MCF 10A (cell line): ENCODE measurements at regions of chr9 and their contacts with region 1.

Region 1: DNA sequence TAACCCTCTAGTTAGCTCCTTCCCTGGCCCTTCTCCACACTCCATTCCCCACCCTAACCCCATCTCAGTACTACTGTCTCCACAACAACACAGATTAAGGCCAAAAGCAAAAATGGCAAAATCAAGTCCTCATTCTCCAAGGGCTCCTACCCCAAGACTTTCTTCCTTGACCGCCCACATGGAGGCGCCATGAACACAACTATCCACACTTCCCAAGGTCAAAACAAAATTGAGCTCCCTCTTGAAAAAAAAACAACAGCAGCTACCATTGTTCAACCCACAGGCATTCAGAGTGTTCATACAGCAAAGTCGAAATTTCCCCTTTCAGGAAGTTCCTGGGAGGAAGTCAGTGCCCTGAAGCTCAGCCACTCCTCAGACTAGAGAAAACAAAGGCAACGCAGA is 54.4 kb downstream of the GNAQ start:
- DNase-seq: peak; percentile 78
- H3K4me3 Mint-ChIP-seq: no peak overlapping the region
- H3K27ac Mint-ChIP-seq: peak overlapping the region; percentile 43
- H3K4me1 Mint-ChIP-seq: peaks cover 35% of the 10 kb centered on the region
- H3K27me3 Mint-ChIP-seq: no peaks in the 10 kb centered on the region
- CTCF ChIP-seq: peak; percentile 42

Region 2: GRCh38 chr9:77997611-77998284 is 20.5 kb after region 1 on chr9:
- CTCF ChIA-PET with region 1: interaction called, 7 read pairs
- POLR2A ChIA-PET with region 1: interaction called, 10 read pairs
- intact Hi-C with region 1: no loop called
- DNase-seq: no peak
- H3K4me3 Mint-ChIP-seq: no peak overlapping the region
- H3K27ac Mint-ChIP-seq: no peak overlapping the region
- H3K4me1 Mint-ChIP-seq: peaks cover 19% of the 10 kb centered on the region
- H3K27me3 Mint-ChIP-seq: no peaks in the 10 kb centered on the region
- CTCF ChIP-seq: no peak

Region 3: DNA sequence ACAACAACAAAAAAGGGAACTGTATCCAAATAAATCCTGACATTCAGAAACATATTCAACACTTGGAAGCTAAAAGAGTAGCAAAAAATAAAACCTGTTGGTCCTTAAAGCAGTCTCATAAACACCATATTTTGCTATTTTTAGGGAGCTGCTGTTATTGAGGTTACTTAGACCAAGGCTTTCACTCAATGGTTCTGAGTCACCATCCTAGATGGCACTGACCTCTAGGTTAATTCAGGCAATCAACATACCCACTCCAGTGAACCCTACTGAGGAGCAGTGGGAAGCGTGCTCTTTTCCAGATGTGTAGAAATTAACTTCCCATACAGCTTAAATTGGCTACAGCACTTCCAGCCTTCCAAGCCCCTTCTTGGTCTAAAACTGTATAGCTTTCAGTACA is 49.2 kb after region 1 on chr9:
- CTCF ChIA-PET with region 1: interaction called, 11 read pairs
- POLR2A ChIA-PET with region 1: interaction called, 30 read pairs
- intact Hi-C with region 1: no loop called
- DNase-seq: peak; percentile 25
- H3K4me3 Mint-ChIP-seq: no peak overlapping the region
- H3K27ac Mint-ChIP-seq: peak overlapping the region; percentile 27
- H3K4me1 Mint-ChIP-seq: peaks cover 48% of the 10 kb centered on the region
- H3K27me3 Mint-ChIP-seq: no peaks in the 10 kb centered on the region
- CTCF ChIP-seq: no peak

Region 4: DNA sequence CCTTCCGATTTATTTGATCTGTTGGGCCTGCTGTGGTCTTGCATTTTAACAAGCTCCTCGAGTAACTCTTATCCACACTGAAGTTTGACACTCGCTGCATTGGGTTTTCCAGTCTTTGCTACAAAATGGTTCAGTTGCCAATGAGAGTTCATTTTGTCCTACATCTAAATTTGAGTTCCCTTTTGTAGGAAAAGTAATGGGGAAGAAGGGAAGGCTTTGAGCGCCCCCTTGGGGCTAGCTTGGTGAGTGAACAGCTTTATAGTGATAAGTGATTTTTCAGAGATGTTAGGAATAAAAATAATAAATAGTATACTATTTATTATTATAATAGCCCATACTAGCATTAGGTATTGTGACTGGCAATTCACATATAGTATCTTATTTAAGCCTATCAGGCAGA is 144.3 kb after region 1 on chr9:
- CTCF ChIA-PET with region 1: interaction called, 46 read pairs
- POLR2A ChIA-PET with region 1: interaction called, 6 read pairs
- intact Hi-C with region 1: loop called (anchors 1 kb)
- DNase-seq: peak; percentile 80
- H3K4me3 Mint-ChIP-seq: no peak overlapping the region
- H3K27ac Mint-ChIP-seq: no peak overlapping the region
- H3K4me1 Mint-ChIP-seq: peaks cover 30% of the 10 kb centered on the region
- H3K27me3 Mint-ChIP-seq: no peaks in the 10 kb centered on the region
- CTCF ChIP-seq: peak; percentile 66